Activated naive CD4-positive, alpha-beta T cell treated with anti-CD3 and anti-CD28 coated beads for 36 hours (primary cell): ENCODE measurements at regions of chr11 and their contacts with region 1.

Region 1: GRCh38 chr11:88543902-88544655 is 206.5 kb upstream of the CTSC start:
- DNase-seq: peak; percentile 86
- H3K4me3 Mint-ChIP-seq: no peak overlapping the region
- H3K27ac Mint-ChIP-seq: no peak overlapping the region
- H3K4me1 Mint-ChIP-seq: no peaks in the 10 kb centered on the region
- H3K27me3 Mint-ChIP-seq: no peaks in the 10 kb centered on the region

Region 2: GRCh38 chr11:87239531-87239930 is 1304.5 kb before region 1 on chr11:
- CTCF ChIA-PET with region 1: no interaction called
- intact Hi-C with region 1: no loop called
- DNase-seq: no peak
- H3K4me3 Mint-ChIP-seq: no peak overlapping the region
- H3K27ac Mint-ChIP-seq: no peak overlapping the region
- H3K4me1 Mint-ChIP-seq: no peaks in the 10 kb centered on the region
- H3K27me3 Mint-ChIP-seq: no peaks in the 10 kb centered on the region

Region 3: GRCh38 chr11:87722756-87723565 is 821.1 kb before region 1 on chr11:
- CTCF ChIA-PET with region 1: no interaction called
- intact Hi-C with region 1: loop called (anchors 2 kb)
- DNase-seq: peak; percentile 6
- H3K4me3 Mint-ChIP-seq: no peak overlapping the region
- H3K27ac Mint-ChIP-seq: no peak overlapping the region
- H3K4me1 Mint-ChIP-seq: no peaks in the 10 kb centered on the region
- H3K27me3 Mint-ChIP-seq: peaks cover 3% of the 10 kb centered on the region

Region 4: GRCh38 chr11:88016392-88017170 is 527.5 kb before region 1 on chr11:
- CTCF ChIA-PET with region 1: interaction called, 29 read pairs
- intact Hi-C with region 1: loop called (anchors 1 kb)
- DNase-seq: peak; percentile 77
- H3K4me3 Mint-ChIP-seq: no peak overlapping the region
- H3K27ac Mint-ChIP-seq: no peak overlapping the region
- H3K4me1 Mint-ChIP-seq: no peaks in the 10 kb centered on the region
- H3K27me3 Mint-ChIP-seq: no peaks in the 10 kb centered on the region

Region 5: DNA sequence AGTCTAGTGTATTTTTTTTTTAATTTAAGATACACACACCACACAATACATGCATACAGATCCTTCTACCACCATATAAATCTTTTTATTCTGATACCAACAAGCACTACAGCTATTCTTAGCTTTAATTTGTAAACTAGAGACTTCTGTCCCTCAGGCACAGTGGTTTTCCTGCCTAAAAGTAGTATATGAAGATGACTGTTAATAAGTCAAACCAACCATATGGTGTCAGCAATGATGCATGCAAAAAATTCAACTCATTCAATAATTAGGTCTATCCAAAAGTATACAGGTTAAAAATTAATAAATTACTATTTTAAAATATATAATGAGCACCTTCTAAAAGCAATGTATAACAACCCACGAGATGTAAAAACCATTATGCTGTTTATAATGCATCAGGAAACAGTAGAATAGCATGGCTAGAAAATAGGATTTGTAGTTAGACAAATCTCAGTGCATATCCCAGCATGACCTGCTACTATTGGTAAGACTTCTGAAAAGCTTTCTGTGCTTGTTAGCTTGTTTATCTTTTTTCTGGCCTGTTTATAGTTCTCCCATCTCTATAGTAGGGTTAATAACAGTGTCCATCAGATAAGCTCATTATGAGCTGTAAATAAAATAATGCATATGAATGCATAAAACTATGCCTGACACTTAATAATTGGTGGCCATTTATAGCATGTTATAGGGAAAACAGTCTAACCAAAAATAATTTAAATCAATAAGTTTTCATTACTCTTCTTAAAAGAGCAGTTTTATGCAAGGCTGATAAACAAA is 379.1 kb before region 1 on chr11:
- CTCF ChIA-PET with region 1: interaction called, 6 read pairs
- intact Hi-C with region 1: loop called (anchors 1 kb)
- DNase-seq: no peak
- H3K4me3 Mint-ChIP-seq: no peak overlapping the region
- H3K27ac Mint-ChIP-seq: no peak overlapping the region
- H3K4me1 Mint-ChIP-seq: no peaks in the 10 kb centered on the region
- H3K27me3 Mint-ChIP-seq: peaks cover 8% of the 10 kb centered on the region

Region 6: DNA sequence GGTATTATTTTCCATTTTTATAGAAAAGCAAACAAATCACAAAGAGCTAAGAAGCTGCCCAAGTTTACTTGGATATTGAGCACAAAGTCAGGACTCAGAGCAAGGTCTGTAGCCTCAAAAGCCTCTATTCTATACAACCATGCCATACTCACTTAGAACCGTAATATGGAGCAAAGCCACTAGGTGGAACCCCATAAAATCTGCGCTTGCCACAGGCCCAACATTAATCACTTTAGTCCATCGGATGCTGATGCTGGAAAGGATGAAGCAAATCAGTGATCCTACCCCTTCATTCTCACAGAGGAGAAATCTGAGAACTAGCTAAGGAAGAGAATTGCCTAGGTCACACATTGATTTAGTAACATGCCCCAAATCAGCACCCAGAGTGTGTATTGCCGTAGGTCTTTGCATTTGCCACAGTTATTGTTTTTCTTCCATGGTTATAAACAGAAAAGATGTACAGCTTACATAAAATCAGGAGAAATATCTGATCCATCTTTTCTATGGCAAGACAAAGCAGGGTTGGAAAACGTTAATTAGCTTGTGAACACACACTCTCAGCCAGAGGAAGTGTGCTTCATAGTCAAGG is 312.1 kb before region 1 on chr11:
- CTCF ChIA-PET with region 1: interaction called, 18 read pairs
- intact Hi-C with region 1: loop called (anchors 1 kb)
- DNase-seq: peak; percentile 34
- H3K4me3 Mint-ChIP-seq: no peak overlapping the region
- H3K27ac Mint-ChIP-seq: no peak overlapping the region
- H3K4me1 Mint-ChIP-seq: no peaks in the 10 kb centered on the region
- H3K27me3 Mint-ChIP-seq: peaks cover 4% of the 10 kb centered on the region

Region 7: GRCh38 chr11:88603091-88603867 is 59.2 kb after region 1 on chr11:
- CTCF ChIA-PET with region 1: no interaction called
- intact Hi-C with region 1: no loop called
- DNase-seq: no peak
- H3K4me3 Mint-ChIP-seq: no peak overlapping the region
- H3K27ac Mint-ChIP-seq: no peak overlapping the region
- H3K4me1 Mint-ChIP-seq: peaks cover 4% of the 10 kb centered on the region
- H3K27me3 Mint-ChIP-seq: no peaks in the 10 kb centered on the region